GM10248 (cell line): ENCODE measurements at regions of chr16 and their contacts with region 1.

Region 1: GRCh38 chr16:81623363-81624102 is 155.6 kb upstream of the PLCG2 start:
- DNase-seq: peak; percentile 66
- CTCF ChIP-seq: peak; percentile 73

Region 2: DNA sequence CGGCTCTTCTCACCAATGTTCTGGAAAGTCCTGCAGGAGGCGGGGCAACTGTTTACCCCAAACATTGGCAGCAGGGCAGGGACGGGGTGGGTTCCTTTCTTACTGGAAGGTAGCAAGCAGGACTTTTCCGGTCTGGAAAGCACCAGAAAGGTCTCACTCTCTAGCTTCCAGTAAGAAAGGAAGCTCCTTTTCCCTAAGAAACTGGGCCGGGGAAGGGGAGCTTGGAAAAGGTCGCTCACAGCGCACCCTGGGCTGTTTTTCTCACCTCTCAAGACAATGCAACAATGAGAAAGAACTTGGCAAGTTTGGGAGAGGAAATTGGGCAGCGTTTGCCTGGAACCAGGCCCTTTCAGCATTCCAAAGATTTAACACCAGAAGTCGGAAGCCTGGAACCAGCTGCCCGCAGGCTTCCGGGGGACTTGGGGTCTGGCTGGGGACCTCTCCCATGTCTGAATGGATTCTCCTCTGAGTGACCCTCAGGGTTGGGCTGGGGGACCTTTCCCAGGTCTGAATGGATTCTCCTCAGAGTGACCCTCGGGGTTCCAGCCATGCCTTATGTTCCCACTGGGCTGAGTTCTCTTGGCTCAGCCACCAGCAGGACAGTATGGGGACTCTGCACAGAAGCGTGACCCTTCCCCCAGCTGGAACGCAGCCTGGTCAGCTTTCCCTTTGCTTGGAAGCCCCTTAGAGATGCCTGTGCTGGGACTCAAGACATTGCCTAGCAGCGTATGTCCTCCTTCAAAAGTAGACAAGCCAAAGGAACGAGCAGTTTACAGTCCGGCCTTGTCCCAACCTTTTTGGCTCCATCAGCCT is 11.0 kb before region 1 on chr16:
- CTCF ChIA-PET with region 1: interaction called, 10 read pairs
- POLR2A ChIA-PET with region 1: no interaction called
- DNase-seq: no peak
- CTCF ChIP-seq: no peak

Region 3: GRCh38 chr16:81696961-81697615 is 73.6 kb after region 1 on chr16:
- CTCF ChIA-PET with region 1: interaction called, 11 read pairs
- POLR2A ChIA-PET with region 1: no interaction called
- DNase-seq: peak; percentile 73
- CTCF ChIP-seq: peak; percentile 75

Region 4: DNA sequence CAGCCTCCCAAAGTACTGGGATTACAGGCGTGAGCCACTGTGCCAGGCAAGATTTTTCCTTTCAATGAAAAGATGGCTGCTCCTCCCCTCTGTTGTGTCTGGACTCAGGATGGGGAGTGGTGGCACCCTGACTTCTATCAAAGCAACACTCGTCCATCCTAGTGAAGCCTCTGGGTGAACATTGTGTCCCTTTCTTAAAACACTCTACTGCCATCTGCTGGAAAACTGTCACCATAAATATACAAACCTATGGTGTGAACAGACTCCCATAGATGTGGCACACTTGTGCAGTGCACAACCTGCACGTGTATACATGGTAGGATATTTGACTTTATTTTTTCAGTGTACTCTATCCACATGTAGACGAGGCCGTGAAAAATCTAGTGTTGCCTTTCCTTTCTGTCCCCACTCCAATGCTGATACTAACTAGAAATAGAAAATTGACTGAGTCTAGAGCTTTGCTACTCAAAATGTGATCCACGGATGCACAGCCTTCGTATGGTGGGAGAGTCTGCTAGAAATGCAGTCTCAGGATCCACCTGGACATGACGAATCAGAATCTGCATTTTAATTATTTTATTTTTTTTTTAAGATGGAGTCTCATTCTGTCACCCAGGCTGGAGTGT is 99.7 kb after region 1 on chr16:
- CTCF ChIA-PET with region 1: interaction called, 43 read pairs
- POLR2A ChIA-PET with region 1: no interaction called
- DNase-seq: peak; percentile 72
- CTCF ChIP-seq: peak; percentile 48

Region 5: GRCh38 chr16:81730090-81731051 is 106.8 kb after region 1 on chr16:
- CTCF ChIA-PET with region 1: interaction called, 43 read pairs
- POLR2A ChIA-PET with region 1: no interaction called
- DNase-seq: peak; percentile 79
- CTCF ChIP-seq: peak; percentile 65

Region 6: DNA sequence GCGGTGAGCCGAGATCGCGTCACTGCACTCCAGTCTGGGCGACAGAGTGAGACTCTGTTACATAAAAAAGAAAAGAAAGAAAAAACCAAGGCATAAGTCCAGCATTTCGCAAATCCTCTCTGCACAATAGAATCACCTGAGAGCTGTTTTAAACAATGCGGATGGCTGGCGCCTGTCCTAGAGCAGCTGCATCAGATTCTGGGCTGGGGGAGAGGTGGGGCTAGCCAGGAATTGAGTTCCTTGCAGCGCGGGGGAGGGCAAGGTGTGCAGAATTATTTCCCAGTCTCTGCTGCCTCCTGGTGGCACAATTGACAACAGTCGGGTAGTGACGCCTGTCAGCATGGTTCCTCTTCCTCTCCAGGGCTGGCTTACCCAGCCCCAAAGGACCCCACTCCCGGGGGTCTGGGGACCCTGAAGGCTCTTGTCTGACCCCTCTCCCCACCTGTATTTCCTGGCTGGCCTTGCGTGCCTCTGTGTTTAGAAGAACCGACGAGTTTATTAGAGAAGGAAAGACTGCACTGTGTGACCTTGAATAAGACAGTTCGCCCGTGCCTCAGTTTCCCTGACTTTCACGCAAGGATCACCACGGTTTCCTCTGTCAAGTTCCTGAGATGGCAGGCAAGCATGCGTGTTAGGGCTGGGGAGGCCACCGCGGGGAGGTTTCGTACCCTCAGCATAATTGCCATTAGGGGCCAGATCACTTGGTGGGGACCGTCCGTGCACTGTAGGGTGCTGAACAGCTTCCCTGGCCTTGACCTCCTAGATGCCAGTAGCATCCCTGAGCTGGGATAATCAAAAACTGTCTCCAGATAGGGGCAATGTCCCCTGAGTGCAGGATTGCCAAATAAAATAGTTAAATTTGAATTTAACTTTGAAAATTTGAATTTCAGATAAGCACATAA is 114.6 kb after region 1 on chr16:
- CTCF ChIA-PET with region 1: interaction called, 16 read pairs
- POLR2A ChIA-PET with region 1: no interaction called
- DNase-seq: peak; percentile 87
- CTCF ChIP-seq: peak; percentile 91